ENCODE measurements at regions of chr10 and their contacts with region 1.

Region 1: DNA sequence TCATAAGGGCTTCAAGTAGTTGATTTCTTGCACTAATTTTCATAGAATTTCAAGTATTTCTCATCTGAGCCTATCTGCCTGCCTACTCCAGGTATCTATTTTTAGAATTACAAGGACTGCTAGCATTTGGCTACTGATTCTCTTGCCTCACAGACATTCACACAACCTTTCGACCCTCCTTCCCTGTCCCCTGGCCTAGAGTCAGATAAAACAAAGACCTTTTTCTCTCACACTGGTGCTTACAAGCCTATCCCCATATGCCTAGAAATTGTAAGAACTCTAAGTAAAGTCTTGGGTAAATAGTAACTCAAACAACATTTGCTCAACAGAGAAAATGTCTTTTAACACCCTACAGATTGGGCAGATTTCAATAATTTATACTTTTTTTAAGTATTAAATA is 6.3 kb downstream of the GPAM start:
- DNase-seq: no peak
- ATAC-seq: peak; percentile 55 to 74
- H3K4me3 ChIP-seq: no peak overlapping the region
- H3K27ac ChIP-seq: no peak overlapping the region
- H3K4me1 ChIP-seq: no peaks in the 10 kb centered on the region
- H3K27me3 ChIP-seq: no peaks in the 10 kb centered on the region

Region 2: GRCh38 chr10:112115799-112116385 is 61.4 kb before region 1 on chr10:
- intact Hi-C with region 1: no loop called
- DNase-seq: no peak
- ATAC-seq: no peak
- H3K4me3 ChIP-seq: no peak overlapping the region
- H3K27ac ChIP-seq: no peak overlapping the region
- H3K4me1 ChIP-seq: no peaks in the 10 kb centered on the region
- H3K27me3 ChIP-seq: no peaks in the 10 kb centered on the region

Region 3: GRCh38 chr10:112446855-112447711 is 269.8 kb after region 1 on chr10 and contains the starts of genes VTI1A and ZDHHC6:
- intact Hi-C with region 1: loop called in 1 of 4 experiments (anchors 10 kb)
- DNase-seq: peak; percentile 84 to 94 (median 92)
- ATAC-seq: peak; percentile 98
- H3K4me3 ChIP-seq: peak within 1 kb of the TSS; percentile 77
- H3K27ac ChIP-seq: peak within 1 kb of the TSS; percentile 95
- H3K4me1 ChIP-seq: peaks cover 2% of the 10 kb centered on the region
- H3K27me3 ChIP-seq: no peaks in the 10 kb centered on the region
- total RNA-seq, gene VTI1A: 17.6 to 22.5 (median 21.1) TPM
- total RNA-seq, gene ZDHHC6: 17.8 to 27.2 (median 18.5) TPM

Region 4: GRCh38 chr10:112821663-112822062 is 644.4 kb after region 1 on chr10:
- intact Hi-C with region 1: no loop called
- DNase-seq: no peak
- ATAC-seq: no peak
- H3K4me3 ChIP-seq: no peak overlapping the region
- H3K27ac ChIP-seq: no peak overlapping the region
- H3K4me1 ChIP-seq: no peaks in the 10 kb centered on the region
- H3K27me3 ChIP-seq: no peaks in the 10 kb centered on the region